PC-9 (cell line): ENCODE measurements at regions of chr12 and their contacts with region 1.

Region 1: DNA sequence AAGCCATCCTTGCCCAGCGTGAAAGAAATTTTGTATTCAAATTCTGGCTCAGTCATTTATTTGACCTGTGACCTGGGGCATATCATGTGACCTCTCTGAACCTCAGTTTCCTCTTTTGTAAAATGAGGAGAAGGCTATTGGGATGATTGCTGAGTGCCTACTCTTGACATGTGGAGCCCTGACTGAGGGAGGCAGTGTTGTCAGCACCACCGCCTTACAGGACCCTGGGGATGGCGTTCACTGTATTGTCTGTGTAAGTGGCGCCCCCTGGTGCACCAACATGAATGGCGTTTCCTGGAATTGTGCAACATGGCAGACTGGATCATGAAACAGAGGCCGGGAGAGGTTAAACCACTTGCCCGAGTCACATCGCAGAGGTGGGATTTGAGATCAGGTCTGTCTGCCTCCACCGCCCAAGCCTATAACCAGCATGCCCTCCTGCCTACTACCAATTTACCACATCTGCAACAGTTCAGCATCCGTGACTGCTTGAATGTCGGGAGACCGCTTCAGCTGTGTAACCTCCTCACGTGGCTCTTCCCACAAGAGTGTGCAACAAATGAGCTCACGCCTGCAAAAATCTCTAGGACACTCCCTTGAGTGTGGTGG is 20.1 kb upstream of the CCDC63 start:
- DNase-seq: peak; percentile 63 to 87
- H3K4me3 ChIP-seq: no peak overlapping the region
- H3K27ac ChIP-seq: no peak overlapping the region
- H3K4me1 ChIP-seq: no peaks in the 10 kb centered on the region
- H3K27me3 ChIP-seq: no peaks in the 10 kb centered on the region; the same call in 1 of the 2 replicates
- CTCF ChIP-seq: peak; percentile 93

Region 2: DNA sequence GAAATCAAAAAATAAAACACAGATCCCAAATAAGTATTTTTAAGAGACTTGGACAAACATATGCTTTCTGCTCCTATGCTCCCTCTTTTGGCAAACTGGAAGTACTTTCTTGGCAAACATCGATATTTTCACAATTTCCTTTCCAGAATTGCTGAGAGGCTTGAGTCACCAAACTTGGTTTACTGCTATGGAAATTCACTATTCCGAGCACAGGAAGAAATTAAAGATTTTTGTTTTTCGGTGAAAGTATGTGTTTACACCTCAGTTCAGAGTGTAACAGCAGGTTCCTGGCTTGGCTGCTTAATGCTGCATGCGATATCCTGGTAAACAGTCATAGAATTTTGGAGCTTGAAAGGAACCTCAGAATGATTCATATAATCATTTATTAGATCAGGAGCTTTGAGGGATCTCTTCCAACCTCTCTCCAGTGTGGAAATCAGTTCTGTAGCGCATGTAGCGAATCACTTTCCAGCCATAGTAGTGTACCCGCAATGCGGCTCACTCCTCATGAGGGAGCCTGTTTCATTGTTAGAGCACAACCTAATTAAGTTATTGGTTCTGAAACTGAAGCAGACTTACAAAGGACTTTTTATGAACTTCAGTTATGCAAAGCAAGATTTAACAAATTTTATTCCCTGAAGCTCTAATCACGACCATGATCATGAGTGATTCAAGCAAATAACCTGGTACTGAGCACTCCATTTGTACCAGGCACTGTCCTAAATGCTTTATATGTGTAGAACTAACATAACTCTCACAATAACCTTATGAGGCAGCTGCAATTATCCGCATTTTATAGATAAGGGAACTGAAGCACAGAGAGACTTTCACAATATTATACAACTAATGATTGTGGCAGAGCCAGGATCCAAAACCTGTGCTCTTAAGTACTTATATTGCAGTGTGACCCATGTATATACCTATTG is 602.1 kb before region 1 on chr12:
- CTCF ChIA-PET with region 1: no interaction called
- POLR2A ChIA-PET with region 1: no interaction called
- intact Hi-C with region 1: no loop called
- DNase-seq: peak in 1 of 2 experiments; percentile 64
- H3K4me3 ChIP-seq: peak overlapping the region; percentile 10; the same call in 1 of the 2 replicates
- H3K27ac ChIP-seq: peak overlapping the region; percentile 79
- H3K4me1 ChIP-seq: peaks cover 34% of the 10 kb centered on the region
- H3K27me3 ChIP-seq: no peaks in the 10 kb centered on the region
- CTCF ChIP-seq: peak; percentile 46

Region 3: DNA sequence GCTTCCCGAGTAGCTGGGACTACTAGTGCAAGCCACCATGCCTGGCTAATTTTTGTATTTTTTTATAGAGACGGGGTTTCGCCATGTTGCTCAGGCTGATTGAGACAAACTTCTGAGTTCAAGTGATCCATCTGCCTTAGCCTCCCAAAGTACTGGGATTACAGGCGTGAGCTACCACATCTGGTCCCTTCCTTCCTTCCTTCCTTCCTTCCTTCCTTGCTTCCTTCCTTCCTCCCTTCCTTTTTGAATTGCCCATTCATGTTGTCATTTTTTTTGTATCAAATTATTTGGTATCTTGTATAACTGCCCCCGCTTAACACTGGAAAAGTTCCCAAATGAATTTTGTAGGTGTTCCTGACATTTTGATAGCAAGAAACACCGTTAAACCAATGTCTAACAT is 312.9 kb before region 1 on chr12:
- CTCF ChIA-PET with region 1: no interaction called
- POLR2A ChIA-PET with region 1: no interaction called
- intact Hi-C with region 1: loop called (anchors 5 kb)
- DNase-seq: no peak
- H3K4me3 ChIP-seq: no peak overlapping the region
- H3K27ac ChIP-seq: no peak overlapping the region
- H3K4me1 ChIP-seq: no peaks in the 10 kb centered on the region
- H3K27me3 ChIP-seq: no peaks in the 10 kb centered on the region
- CTCF ChIP-seq: no peak

Region 4: DNA sequence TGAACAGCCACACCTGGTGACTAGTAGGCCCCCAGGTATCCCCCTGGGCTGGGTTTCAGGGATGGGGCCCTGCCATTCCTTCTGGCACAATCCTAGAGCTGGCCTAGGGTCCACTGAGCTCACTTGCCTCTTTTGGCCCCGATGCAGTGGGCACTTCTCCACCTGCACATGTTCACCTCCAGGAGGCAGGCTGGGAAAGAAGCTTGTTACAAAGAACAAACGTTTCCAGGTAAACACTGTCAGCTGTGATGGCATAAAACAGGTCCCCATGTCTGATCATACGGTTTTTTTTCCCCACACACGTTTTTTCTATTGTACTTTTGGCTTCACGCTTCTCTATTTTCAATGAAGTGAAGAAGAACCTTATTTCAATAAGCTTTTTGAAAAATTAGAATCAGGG is 121.9 kb before region 1 on chr12:
- CTCF ChIA-PET with region 1: interaction called, 5 read pairs
- POLR2A ChIA-PET with region 1: no interaction called
- intact Hi-C with region 1: loop called (anchors 10 kb)
- DNase-seq: no peak
- H3K4me3 ChIP-seq: no peak overlapping the region
- H3K27ac ChIP-seq: no peak overlapping the region
- H3K4me1 ChIP-seq: no peaks in the 10 kb centered on the region
- H3K27me3 ChIP-seq: no peaks in the 10 kb centered on the region
- CTCF ChIP-seq: peak; percentile 58; the same call in 1 of the 2 replicates

Region 5: GRCh38 chr12:110860833-110861296 is 34.2 kb after region 1 on chr12:
- CTCF ChIA-PET with region 1: interaction called, 12 read pairs
- POLR2A ChIA-PET with region 1: no interaction called
- intact Hi-C with region 1: no loop called
- DNase-seq: no peak
- H3K4me3 ChIP-seq: no peak overlapping the region
- H3K27ac ChIP-seq: no peak overlapping the region
- H3K4me1 ChIP-seq: no peaks in the 10 kb centered on the region
- H3K27me3 ChIP-seq: 0 out of 2 replicates have a peak, but pooled peaks cover 14% of the 10 kb centered on the region
- CTCF ChIP-seq: no peak

Region 6: DNA sequence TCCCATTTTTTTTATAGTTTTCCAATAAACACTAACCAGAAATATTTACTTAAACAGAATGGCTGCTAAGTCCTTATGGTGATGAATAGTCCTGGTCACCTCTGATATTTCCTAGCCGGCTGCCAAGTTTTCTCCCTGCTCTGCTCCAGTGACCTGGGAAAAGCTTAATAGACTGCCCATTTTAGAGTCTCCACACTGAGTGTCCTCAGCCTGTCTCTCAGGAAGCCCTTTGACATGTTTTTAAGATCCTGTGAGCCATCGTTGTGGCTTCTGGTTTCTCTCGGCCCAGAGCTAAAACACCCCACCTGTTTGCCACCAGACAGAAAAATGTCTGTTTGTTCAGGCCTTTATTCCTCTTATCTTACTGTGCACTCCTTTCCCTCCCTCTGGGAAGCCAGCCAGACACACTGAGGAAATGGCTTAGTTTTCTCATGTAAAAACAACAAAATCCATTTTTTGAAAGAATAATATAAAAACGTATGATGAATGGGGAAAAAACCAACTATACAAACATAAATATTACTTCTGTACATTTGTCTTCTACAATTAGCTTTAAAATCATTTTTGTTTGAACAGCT is 914.6 kb after region 1 on chr12:
- CTCF ChIA-PET with region 1: no interaction called
- POLR2A ChIA-PET with region 1: no interaction called
- intact Hi-C with region 1: no loop called
- DNase-seq: no peak
- H3K4me3 ChIP-seq: no peak overlapping the region
- H3K27ac ChIP-seq: no peak overlapping the region
- H3K4me1 ChIP-seq: no peaks in the 10 kb centered on the region
- H3K27me3 ChIP-seq: no peaks in the 10 kb centered on the region
- CTCF ChIP-seq: no peak